WTC11 (cell line): ENCODE measurements at regions of chr20 and their contacts with region 1.

Region 1: DNA sequence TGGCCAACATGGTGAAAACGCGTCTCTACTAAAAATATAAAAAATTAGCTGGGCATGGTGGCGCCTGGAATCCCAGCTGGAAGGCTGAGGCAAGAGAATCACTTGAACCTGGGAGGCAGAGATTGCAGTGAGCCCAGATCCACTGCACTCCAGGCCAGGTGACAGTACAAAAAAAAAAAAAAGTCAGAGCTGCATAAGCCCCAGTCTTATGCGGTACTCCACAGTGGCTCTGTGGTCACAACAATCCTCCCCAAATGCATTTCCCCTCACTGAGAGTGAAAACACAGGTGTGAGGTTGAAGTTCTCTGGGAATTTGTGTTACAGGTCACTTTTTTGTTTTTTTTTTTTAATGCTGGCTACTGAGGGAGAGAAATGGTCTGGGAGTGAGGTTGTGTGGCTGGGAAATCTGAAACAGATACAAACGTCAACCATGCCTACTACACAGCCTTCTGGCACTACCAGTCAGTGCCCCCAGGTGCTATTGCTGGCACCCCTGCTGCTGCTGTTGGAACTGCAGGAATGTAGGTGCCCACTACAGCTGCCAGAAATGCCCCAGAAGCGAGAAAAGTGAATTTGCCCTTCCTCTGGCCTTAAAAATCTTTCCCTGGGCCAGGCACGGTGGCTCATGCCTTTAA is 5.7 kb downstream of the MRPS26 start:
- DNase-seq: no peak
- ATAC-seq: no peak
- H3K4me3 Mint-ChIP-seq: no peak overlapping the region
- H3K27ac Mint-ChIP-seq: no peak overlapping the region
- H3K4me1 Mint-ChIP-seq: peaks cover 6% of the 10 kb centered on the region
- H3K27me3 Mint-ChIP-seq: no peaks in the 10 kb centered on the region
- CTCF ChIP-seq: no peak

Region 2: GRCh38 chr20:2873010-2873746 is 178.3 kb before region 1 on chr20 and contains the start of gene PTPRA:
- CTCF ChIA-PET with region 1: no interaction called
- POLR2A ChIA-PET with region 1: no interaction called
- DNase-seq: peak; percentile 90
- ATAC-seq: peak; percentile 87
- H3K4me3 Mint-ChIP-seq: peak within 1 kb of the TSS; percentile 90
- H3K27ac Mint-ChIP-seq: peak within 1 kb of the TSS; percentile 70
- H3K4me1 Mint-ChIP-seq: peaks cover 30% of the 10 kb centered on the region
- H3K27me3 Mint-ChIP-seq: peaks cover 21% of the 10 kb centered on the region
- CTCF ChIP-seq: no peak
- total RNA-seq, gene PTPRA: 43.8 to 48.8 TPM (median 47.2 TPM) in 3 replicates

Region 3: DNA sequence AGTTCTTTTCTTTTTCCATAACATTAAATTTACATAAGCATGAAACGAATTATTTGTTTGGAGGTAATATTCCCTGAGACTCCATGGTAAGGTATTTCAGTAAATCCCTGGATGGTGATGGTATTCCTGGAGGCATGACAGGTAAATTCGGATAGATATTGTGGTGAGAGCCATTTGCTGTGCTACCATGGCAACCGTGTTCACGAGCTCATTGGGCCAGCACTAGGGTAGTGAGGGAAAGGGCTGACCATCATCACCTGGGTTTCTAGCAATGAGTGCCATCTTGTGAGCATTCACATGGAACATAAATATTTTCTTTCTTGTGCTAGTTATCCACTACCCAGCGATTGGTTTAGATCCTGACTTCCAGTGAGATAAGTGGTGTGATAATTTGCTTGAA is 60.0 kb before region 1 on chr20:
- CTCF ChIA-PET with region 1: no interaction called
- POLR2A ChIA-PET with region 1: no interaction called
- DNase-seq: no peak
- ATAC-seq: no peak
- H3K4me3 Mint-ChIP-seq: no peak overlapping the region
- H3K27ac Mint-ChIP-seq: no peak overlapping the region
- H3K4me1 Mint-ChIP-seq: no peaks in the 10 kb centered on the region
- H3K27me3 Mint-ChIP-seq: no peaks in the 10 kb centered on the region
- CTCF ChIP-seq: no peak

Region 4: GRCh38 chr20:3071610-3072529 is 20.4 kb after region 1 on chr20 and contains the start of gene OXT:
- CTCF ChIA-PET with region 1: interaction called, 16 read pairs
- POLR2A ChIA-PET with region 1: interaction called, 6 read pairs
- DNase-seq: peak; percentile 69
- ATAC-seq: peak; percentile 67
- H3K4me3 Mint-ChIP-seq: peak within 1 kb of the TSS; percentile 66
- H3K27ac Mint-ChIP-seq: no peak within 1 kb of the TSS
- H3K4me1 Mint-ChIP-seq: peaks cover 6% of the 10 kb centered on the region
- H3K27me3 Mint-ChIP-seq: peaks cover 54% of the 10 kb centered on the region
- CTCF ChIP-seq: no peak
- total RNA-seq, gene OXT: not detected in 3 replicates

Region 5: DNA sequence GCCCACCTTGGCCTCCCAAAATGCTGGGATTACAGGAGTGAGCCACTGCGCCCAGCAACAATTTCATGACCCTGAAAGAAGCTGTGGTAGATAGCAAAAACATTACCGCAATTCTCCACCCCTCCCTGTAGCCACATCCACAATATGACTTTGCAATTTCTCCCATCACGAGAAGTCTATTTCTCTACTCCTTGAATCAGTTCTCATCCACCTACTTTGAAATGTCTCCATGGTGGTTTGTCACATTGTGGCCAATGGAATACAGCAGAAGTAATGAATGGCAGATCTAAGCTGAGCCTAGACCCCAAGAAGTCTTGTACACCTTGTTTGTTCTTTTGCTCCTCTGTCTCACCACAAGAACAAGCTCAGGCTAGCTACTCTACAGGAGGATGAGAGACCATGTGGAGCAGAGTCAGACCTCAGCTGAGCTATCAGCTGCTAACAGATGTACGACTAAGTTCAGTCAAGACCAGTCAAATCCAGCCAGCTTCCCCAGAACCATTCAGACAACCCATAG is 26.2 kb after region 1 on chr20:
- CTCF ChIA-PET with region 1: interaction called, 16 read pairs
- POLR2A ChIA-PET with region 1: interaction called, 6 read pairs
- DNase-seq: no peak
- ATAC-seq: no peak
- H3K4me3 Mint-ChIP-seq: no peak overlapping the region
- H3K27ac Mint-ChIP-seq: no peak overlapping the region
- H3K4me1 Mint-ChIP-seq: peaks cover under 1% of the 10 kb centered on the region
- H3K27me3 Mint-ChIP-seq: peaks cover 73% of the 10 kb centered on the region
- CTCF ChIP-seq: no peak